ENCODE measurements at regions of chr2 and their contacts with region 1.

Region 1: GRCh38 chr2:165293440-165294353 is 54.5 kb downstream of the SCN2A start:
- DNase-seq: peak in 3 of 10 donors; percentile 11 to 71 (median 39)
- H3K4me3 ChIP-seq: peak overlapping the region in 57 of 59 donors; percentile 5 to 67 (median 49)
- H3K27ac ChIP-seq: peak overlapping the region in 39 of 59 donors; percentile 2 to 86 (median 62)
- H3K27me3 ChIP-seq: no peaks in the 10 kb centered on the region
- CTCF ChIP-seq: peak; percentile 63 to 85 (median 76)

Region 2: DNA sequence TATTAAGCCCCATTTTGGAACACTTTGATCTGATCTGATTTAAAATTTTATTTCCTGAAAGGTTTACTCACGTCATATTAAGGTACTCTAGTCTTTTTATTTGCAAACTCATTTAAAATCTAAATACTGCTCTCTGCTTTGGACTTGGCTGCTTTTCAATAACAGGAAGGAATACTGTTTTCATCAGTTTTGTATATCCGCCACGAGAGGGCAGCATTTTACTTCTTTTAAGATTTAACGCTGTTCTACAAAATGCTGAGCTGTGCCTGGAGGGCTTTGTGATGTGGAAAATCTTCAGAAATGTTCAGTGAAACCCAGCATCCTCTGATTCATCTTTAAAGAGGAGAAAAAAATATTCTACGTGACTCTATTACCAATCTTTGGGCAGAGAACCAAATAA is 300.9 kb before region 1 on chr2:
- intact Hi-C with region 1: loop called in 1 of 2 experiments (anchors 10 kb)
- DNase-seq: peak in 4 of 10 donors; percentile 32 to 60 (median 48)
- H3K4me3 ChIP-seq: no peak overlapping the region
- H3K27ac ChIP-seq: peak overlapping the region in 1 of 59 donors; percentile 5
- H3K27me3 ChIP-seq: no peaks in the 10 kb centered on the region
- CTCF ChIP-seq: peak; percentile 56 to 84 (median 70)

Region 3: DNA sequence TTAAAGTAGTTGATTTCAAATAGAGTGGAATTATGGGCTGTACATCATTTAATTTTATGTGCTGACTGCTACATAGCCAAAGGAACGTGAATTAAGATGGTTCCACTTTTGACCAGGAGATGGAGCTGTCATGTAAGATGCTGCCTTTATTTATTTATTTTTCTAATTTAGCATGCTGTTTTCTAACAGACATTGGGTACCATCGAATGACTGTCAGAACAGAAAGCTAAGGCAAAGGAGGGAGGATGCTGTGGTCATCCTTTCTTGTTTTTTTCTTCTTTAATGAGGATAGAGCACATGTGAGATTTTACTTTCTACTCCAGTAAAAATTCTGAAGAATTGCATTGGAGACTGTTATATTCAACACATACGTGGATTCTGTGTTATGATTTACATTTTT is 54.5 kb before region 1 on chr2 and contains the start of gene SCN2A:
- intact Hi-C with region 1: loop called in 1 of 2 experiments (anchors 10 kb)
- DNase-seq: peak in 2 of 10 donors; percentile 13 to 39
- H3K4me3 ChIP-seq: peak within 1 kb of the TSS in 58 of 59 donors; percentile 15 to 70 (median 54)
- H3K27ac ChIP-seq: peak within 1 kb of the TSS in 58 of 59 donors; percentile 4 to 91 (median 72)
- H3K27me3 ChIP-seq: no peaks in the 10 kb centered on the region
- CTCF ChIP-seq: peak; percentile 63 to 90 (median 77)
- total RNA-seq, gene SCN2A: 55.8 to 282 (median 170) TPM

Measured in dorsolateral prefrontal cortex (tissue), 120 donors.